Activated CD4-positive, alpha-beta T cell treated with anti-CD3 and anti-CD28 coated beads for 36 hours (primary cell): ENCODE measurements at regions of chr1 and their contacts with region 1.

Region 1: GRCh38 chr1:108643492-108644335 is 17.2 kb downstream of the HENMT1 start:
- DNase-seq: peak; percentile 64
- ATAC-seq: peak; percentile 47
- H3K4me3 Mint-ChIP-seq: no peak overlapping the region
- H3K27ac Mint-ChIP-seq: peak overlapping the region; percentile 72
- H3K4me1 Mint-ChIP-seq: peaks cover 71% of the 10 kb centered on the region
- H3K27me3 Mint-ChIP-seq: no peaks in the 10 kb centered on the region

Region 2: GRCh38 chr1:108199781-108200570 is 443.7 kb before region 1 on chr1 and contains the start of gene SLC25A24:
- CTCF ChIA-PET with region 1: interaction called, 3 read pairs
- POLR2A ChIA-PET with region 1: no interaction called
- intact Hi-C with region 1: loop called (anchors 5 kb)
- DNase-seq: peak; percentile 86
- ATAC-seq: peak; percentile 97
- H3K4me3 Mint-ChIP-seq: peak within 1 kb of the TSS; percentile 84
- H3K27ac Mint-ChIP-seq: peak within 1 kb of the TSS; percentile 78
- H3K4me1 Mint-ChIP-seq: peaks cover 26% of the 10 kb centered on the region
- H3K27me3 Mint-ChIP-seq: no peaks in the 10 kb centered on the region
- total RNA-seq, gene SLC25A24: 13.6 to 15.4 TPM

Region 3: DNA sequence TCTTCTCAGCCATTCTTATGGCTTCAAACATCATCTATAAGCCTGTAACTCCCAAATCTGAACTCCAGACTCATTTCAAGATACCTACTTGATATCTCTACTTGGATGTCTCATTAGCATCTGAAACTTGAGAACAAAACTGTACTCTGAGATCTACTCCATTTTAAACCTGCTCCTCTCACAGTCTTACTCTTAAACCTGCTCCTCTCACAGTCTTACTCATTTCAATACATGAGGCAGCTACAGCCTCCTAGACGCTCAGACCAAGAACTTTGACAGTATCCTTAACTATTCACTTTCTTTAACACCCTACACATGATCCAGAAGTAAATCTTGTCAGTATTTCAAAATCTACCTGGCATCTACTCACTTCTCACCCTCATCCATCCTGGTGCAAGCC is 139.3 kb before region 1 on chr1:
- CTCF ChIA-PET with region 1: interaction called, 49 read pairs
- POLR2A ChIA-PET with region 1: no interaction called
- intact Hi-C with region 1: loop called (anchors 2 kb)
- DNase-seq: peak; percentile 16
- ATAC-seq: peak; percentile 95
- H3K4me3 Mint-ChIP-seq: no peak overlapping the region
- H3K27ac Mint-ChIP-seq: no peak overlapping the region
- H3K4me1 Mint-ChIP-seq: no peaks in the 10 kb centered on the region
- H3K27me3 Mint-ChIP-seq: peaks cover 36% of the 10 kb centered on the region

Region 4: GRCh38 chr1:108512239-108512981 is 131.3 kb before region 1 on chr1:
- CTCF ChIA-PET with region 1: interaction called, 49 read pairs
- POLR2A ChIA-PET with region 1: no interaction called
- intact Hi-C with region 1: loop called (anchors 1 kb)
- DNase-seq: no peak
- ATAC-seq: no peak
- H3K4me3 Mint-ChIP-seq: no peak overlapping the region
- H3K27ac Mint-ChIP-seq: no peak overlapping the region
- H3K4me1 Mint-ChIP-seq: no peaks in the 10 kb centered on the region
- H3K27me3 Mint-ChIP-seq: peaks cover 22% of the 10 kb centered on the region

Region 5: GRCh38 chr1:108590957-108591356 is 52.8 kb before region 1 on chr1:
- CTCF ChIA-PET with region 1: no interaction called
- POLR2A ChIA-PET with region 1: interaction called, 5 read pairs
- intact Hi-C with region 1: loop called (anchors 1 to 2 kb)
- DNase-seq: no peak
- ATAC-seq: peak; percentile 79
- H3K4me3 Mint-ChIP-seq: no peak overlapping the region
- H3K27ac Mint-ChIP-seq: no peak overlapping the region
- H3K4me1 Mint-ChIP-seq: peaks cover 63% of the 10 kb centered on the region
- H3K27me3 Mint-ChIP-seq: no peaks in the 10 kb centered on the region

Region 6: DNA sequence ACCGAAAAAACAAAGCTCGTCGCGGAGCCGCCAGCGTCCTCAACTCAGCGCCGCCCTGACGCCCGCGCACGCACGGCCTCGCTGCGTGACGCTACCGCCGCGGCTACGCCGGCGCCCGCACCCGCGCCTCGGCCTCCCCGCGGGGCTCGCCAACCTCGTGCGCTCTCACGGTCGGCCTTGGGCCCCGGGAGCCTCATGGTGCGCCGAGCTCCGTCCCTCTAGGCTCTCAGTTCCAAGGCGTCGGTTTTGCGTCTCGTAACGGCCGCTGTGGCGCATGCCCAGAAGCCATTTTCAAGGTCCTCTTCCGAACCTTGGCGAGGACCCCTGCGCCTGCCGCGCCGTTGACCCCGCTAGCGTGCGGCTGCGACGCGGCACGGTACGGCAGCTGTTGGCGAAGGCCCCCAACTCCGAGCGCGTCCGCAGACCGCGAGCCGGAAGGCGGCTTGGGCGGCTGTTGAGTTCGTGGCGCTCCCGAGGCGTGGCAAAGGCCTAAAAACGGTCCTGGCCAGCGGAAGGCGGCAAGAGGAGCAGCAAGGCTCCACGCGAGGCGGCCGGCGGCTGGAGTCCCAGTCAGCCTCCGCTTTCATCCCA is 17.4 kb after region 1 on chr1 and contains the start of gene HENMT1:
- CTCF ChIA-PET with region 1: interaction called, 13 read pairs
- POLR2A ChIA-PET with region 1: interaction called, 11 read pairs
- intact Hi-C with region 1: loop called (anchors 1 to 2 kb)
- DNase-seq: peak; percentile 88
- ATAC-seq: peak; percentile 86
- H3K4me3 Mint-ChIP-seq: peak within 1 kb of the TSS; percentile 78
- H3K27ac Mint-ChIP-seq: peak within 1 kb of the TSS; percentile 94
- H3K4me1 Mint-ChIP-seq: peaks cover 31% of the 10 kb centered on the region
- H3K27me3 Mint-ChIP-seq: no peaks in the 10 kb centered on the region
- total RNA-seq, gene HENMT1: 14.6 to 20.6 TPM